Breast epithelium (tissue), 4 donors: ENCODE measurements at regions of chr1 and their contacts with region 1.

Region 1: GRCh38 chr1:21651214-21652042 is 17.7 kb downstream of the RAP1GAP start:
- DNase-seq: no peak
- H3K4me3 ChIP-seq: peak overlapping the region; percentile 38 to 75 (median 58)
- H3K27ac ChIP-seq: peak overlapping the region; percentile 56 to 79
- H3K4me1 ChIP-seq: peaks cover under 1 to 6% of the 10 kb centered on the region in 2 donors
- H3K27me3 ChIP-seq: no peaks in the 10 kb centered on the region
- CTCF ChIP-seq: no peak
- POLR2A ChIP-seq: no peak

Region 2: DNA sequence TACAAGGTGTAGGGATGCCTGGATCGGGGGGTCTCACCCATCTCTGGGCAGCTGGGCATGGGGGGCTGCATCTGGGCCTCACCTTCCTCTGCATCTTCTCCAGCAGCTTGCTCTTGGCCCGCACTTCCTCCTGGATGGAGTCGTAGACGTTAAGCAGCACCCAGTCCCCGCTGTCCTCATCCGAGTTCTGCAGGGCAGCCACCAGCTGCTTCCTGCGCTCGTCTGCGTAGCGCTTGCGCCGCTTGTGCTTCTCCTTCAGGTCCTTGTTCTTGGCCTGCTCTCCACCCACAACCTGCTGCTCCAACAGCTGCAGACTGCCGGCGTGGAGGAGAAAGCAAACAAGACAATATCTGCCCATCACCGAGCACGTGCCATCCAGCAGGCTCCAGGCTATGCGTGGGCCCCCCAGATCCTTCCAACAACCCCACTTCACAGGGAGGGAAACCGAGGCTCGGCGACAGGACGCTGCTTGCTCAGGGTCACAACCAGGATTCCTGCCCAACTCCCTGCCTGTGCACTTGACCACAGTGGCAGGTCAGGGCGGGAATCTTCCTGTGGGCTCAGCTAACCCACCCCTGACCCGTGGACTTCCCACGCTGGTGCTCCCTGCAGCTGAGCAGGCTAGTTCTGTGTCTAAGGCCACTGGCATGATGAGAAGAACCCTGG is 968.7 kb before region 1 on chr1:
- intact Hi-C with region 1: loop called (anchors 5 kb)
- DNase-seq: no peak
- H3K4me3 ChIP-seq: no peak overlapping the region
- H3K27ac ChIP-seq: no peak overlapping the region
- H3K4me1 ChIP-seq: no peaks in the 10 kb centered on the region
- H3K27me3 ChIP-seq: no peaks in the 10 kb centered on the region
- CTCF ChIP-seq: no peak
- POLR2A ChIP-seq: no peak